ENCODE measurements at regions of chr15 and their contacts with region 1.

Region 1: GRCh38 chr15:75639709-75640482 is at the start of gene IMP3:
- DNase-seq: peak; percentile 93
- H3K4me3 Mint-ChIP-seq: peak within 1 kb of the TSS; percentile 90
- H3K27ac Mint-ChIP-seq: peak within 1 kb of the TSS; percentile 94
- H3K4me1 Mint-ChIP-seq: peaks cover 39% of the 10 kb centered on the region
- H3K27me3 Mint-ChIP-seq: peaks cover 6% of the 10 kb centered on the region
- total RNA-seq, gene IMP3: 110 and 113 TPM in 2 replicates

Region 2: DNA sequence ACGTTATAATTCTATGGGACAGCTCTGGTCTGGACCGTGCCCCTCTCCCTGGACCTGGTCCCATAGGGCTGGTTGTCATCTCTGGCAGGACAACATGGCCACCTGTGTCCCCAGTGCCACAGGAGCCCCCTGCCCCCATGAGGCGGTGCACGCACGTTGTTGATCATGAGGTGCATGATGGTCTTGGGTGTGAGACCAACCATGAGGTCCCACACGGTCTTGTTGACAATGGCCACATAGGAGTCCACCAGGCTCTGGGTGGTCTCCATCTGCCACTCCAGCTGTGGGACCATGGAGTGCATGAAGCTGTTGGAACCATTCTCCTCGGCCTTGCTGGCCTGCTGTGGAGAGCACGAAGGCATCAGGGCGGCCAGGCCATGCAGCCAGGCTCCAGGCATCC is 337.6 kb before region 1 on chr15:
- intact Hi-C with region 1: no loop called
- DNase-seq: no peak
- H3K4me3 Mint-ChIP-seq: no peak overlapping the region
- H3K27ac Mint-ChIP-seq: no peak overlapping the region
- H3K4me1 Mint-ChIP-seq: no peaks in the 10 kb centered on the region
- H3K27me3 Mint-ChIP-seq: peaks cover 24% of the 10 kb centered on the region

Region 3: GRCh38 chr15:75508840-75509532 is 130.9 kb before region 1 on chr15:
- intact Hi-C with region 1: loop called (anchors 1 kb)
- DNase-seq: peak; percentile 4
- H3K4me3 Mint-ChIP-seq: no peak overlapping the region
- H3K27ac Mint-ChIP-seq: no peak overlapping the region
- H3K4me1 Mint-ChIP-seq: no peaks in the 10 kb centered on the region
- H3K27me3 Mint-ChIP-seq: no peaks in the 10 kb centered on the region

Region 4: GRCh38 chr15:75578948-75579920 is 60.7 kb before region 1 on chr15 and contains the start of gene PTPN9:
- intact Hi-C with region 1: loop called (anchors 1 kb)
- DNase-seq: peak; percentile 57
- H3K4me3 Mint-ChIP-seq: peak within 1 kb of the TSS; percentile 95
- H3K27ac Mint-ChIP-seq: peak within 1 kb of the TSS; percentile 91
- H3K4me1 Mint-ChIP-seq: peaks cover 23% of the 10 kb centered on the region
- H3K27me3 Mint-ChIP-seq: no peaks in the 10 kb centered on the region
- total RNA-seq, gene PTPN9: 28.0 and 31.7 TPM in 2 replicates

Region 5: GRCh38 chr15:75597667-75598341 is 42.1 kb before region 1 on chr15:
- intact Hi-C with region 1: loop called (anchors 1 kb)
- DNase-seq: peak; percentile 40
- H3K4me3 Mint-ChIP-seq: peak overlapping the region; percentile 71
- H3K27ac Mint-ChIP-seq: peak overlapping the region; percentile 89
- H3K4me1 Mint-ChIP-seq: peaks cover 36% of the 10 kb centered on the region
- H3K27me3 Mint-ChIP-seq: no peaks in the 10 kb centered on the region

Region 6: DNA sequence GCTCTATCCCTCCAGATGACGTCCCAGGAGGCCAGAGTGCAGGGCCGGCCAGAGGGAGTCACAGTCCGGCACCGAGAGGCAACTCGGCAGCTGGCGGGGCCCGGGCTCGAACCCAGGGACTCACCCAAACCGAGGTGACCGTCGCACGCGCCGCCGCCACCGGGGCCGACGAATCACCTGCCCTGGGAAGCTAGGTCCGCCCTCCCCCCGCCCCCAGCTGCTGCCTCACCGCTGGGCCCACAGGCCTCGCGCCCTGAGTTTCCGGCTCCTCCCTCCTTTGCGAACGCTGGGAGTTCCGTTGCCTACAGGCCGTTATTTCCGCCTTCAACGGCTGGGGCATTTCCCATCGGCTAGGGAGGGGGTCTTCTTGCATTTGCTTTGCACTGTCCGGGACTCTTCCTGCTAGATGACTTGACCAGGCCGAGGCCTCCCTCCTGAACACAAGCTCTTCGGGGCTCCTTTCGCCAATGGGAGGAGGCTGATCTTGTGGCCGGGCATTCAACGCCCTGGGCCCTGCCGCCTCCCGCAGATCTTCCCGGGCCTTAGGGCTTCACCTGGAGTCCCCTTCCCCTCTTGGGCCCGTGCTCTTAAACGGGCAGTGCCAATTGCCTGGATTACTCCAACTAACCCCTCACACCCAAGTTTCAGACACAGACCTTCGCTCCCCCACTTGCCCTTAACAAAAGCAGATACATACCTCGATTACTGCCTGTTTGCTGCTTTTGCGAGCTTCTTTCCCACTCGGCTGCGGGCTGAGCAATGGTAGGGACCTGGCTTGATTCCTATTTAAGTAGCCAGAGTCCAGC is 14.2 kb before region 1 on chr15 and contains the start of gene SNUPN:
- intact Hi-C with region 1: loop called (anchors 1 kb)
- DNase-seq: peak; percentile 90
- H3K4me3 Mint-ChIP-seq: peak within 1 kb of the TSS; percentile 94
- H3K27ac Mint-ChIP-seq: peak within 1 kb of the TSS; percentile 100
- H3K4me1 Mint-ChIP-seq: peaks cover 38% of the 10 kb centered on the region
- H3K27me3 Mint-ChIP-seq: no peaks in the 10 kb centered on the region
- total RNA-seq, gene SNUPN: 30.8 and 34.1 TPM in 2 replicates

Region 7: GRCh38 chr15:75684642-75685041 is 44.7 kb after region 1 on chr15:
- intact Hi-C with region 1: loop called (anchors 1 kb)
- DNase-seq: no peak
- H3K4me3 Mint-ChIP-seq: no peak overlapping the region
- H3K27ac Mint-ChIP-seq: no peak overlapping the region
- H3K4me1 Mint-ChIP-seq: no peaks in the 10 kb centered on the region
- H3K27me3 Mint-ChIP-seq: no peaks in the 10 kb centered on the region

Measured in activated T-helper 1 cell treated with anti-CD3 and anti-CD28 coated beads, Interleukin-12 subunit alpha, Interleukin-12 subunit beta, Interleukin-2, Interleukin-4 antibody, amounts not matched to agents 30 ng/mL and 10 ng/mL and 1 ng/mL, durations not matched to agents 14 hours and 24 hours and 36 hours (primary cell).